ENCODE measurements at regions of chr2 and their contacts with region 1.

Region 1: GRCh38 chr2:9630749-9631483 is at the start of gene YWHAQ:
- DNase-seq: peak; percentile 94
- ATAC-seq: peak; percentile 94
- H3K4me3 ChIP-seq: peak within 1 kb of the TSS; percentile 80
- H3K27ac ChIP-seq: peak within 1 kb of the TSS; percentile 83
- H3K4me1 ChIP-seq: peaks cover 3% of the 10 kb centered on the region; the same call in 1 of the 2 replicates
- H3K27me3 ChIP-seq: no peaks in the 10 kb centered on the region
- CTCF ChIP-seq: no peak
- EP300 ChIP-seq: peak; percentile 4 to 78; a peak in 1 of 4 replicates
- POLR2A ChIP-seq: peak; percentile 97
- RAD21 ChIP-seq: no peak; the same call in 1 of the 2 replicates
- polyA plus RNA-seq, gene YWHAQ: 63.0 to 136 TPM

Region 2: DNA sequence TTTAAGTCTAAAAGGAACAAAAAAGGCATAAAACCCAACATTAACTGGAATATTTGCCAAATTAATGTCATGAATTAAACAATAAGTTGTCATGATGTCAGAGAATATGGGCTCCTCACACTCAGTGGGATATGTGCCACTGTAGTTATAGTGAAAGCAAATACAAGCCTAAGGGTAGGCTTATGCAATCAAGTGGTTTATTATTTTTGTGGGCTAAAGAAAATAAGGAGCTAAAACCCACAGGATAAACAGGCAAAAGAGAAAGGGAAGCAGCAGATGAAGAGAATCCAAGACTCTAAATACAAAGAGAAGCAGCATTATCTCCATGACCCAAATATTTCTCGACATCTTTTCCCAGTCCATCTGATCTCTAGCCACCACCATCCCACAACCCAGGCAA is 17.6 kb before region 1 on chr2:
- CTCF ChIA-PET with region 1: interaction called, 4 read pairs
- POLR2A ChIA-PET with region 1: interaction called, 16 read pairs
- RAD21 ChIA-PET with region 1: interaction called, 19 read pairs
- SMC1A ChIA-PET with region 1: interaction called, 43 read pairs
- in situ Hi-C with region 1: no loop called
- intact Hi-C with region 1: no loop called
- DNase-seq: no peak
- ATAC-seq: no peak
- H3K4me3 ChIP-seq: no peak overlapping the region
- H3K27ac ChIP-seq: no peak overlapping the region
- H3K4me1 ChIP-seq: peaks cover 6% of the 10 kb centered on the region; the same call in 1 of the 2 replicates
- H3K27me3 ChIP-seq: no peaks in the 10 kb centered on the region
- CTCF ChIP-seq: no peak
- EP300 ChIP-seq: no peak
- POLR2A ChIP-seq: no peak
- RAD21 ChIP-seq: no peak

Region 3: DNA sequence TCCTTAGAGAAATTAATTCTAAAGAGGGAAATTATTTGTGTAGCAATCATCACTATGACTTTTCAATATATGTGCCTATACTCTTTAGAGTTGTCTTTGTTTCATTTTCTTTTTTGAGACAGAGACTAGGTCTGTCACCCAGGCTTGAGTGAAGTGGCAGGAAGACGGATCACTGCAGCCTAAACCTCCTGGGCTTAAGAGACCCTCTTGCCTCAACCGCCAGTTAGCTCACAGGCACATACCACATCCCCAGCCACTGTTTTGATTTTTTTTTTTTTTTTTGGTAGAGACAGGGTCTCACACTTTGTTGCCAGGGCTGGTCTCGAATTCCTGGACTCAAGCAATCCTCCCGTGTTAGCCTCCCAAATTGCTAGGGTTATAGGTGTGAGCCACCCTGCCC is 12.5 kb before region 1 on chr2:
- CTCF ChIA-PET with region 1: interaction called, 10 read pairs
- POLR2A ChIA-PET with region 1: interaction called, 26 read pairs
- RAD21 ChIA-PET with region 1: interaction called, 18 read pairs
- SMC1A ChIA-PET with region 1: interaction called, 43 read pairs
- in situ Hi-C with region 1: no loop called
- intact Hi-C with region 1: no loop called
- DNase-seq: no peak
- ATAC-seq: peak; percentile 91
- H3K4me3 ChIP-seq: no peak overlapping the region
- H3K27ac ChIP-seq: no peak overlapping the region
- H3K4me1 ChIP-seq: no peaks in the 10 kb centered on the region
- H3K27me3 ChIP-seq: no peaks in the 10 kb centered on the region
- CTCF ChIP-seq: no peak
- EP300 ChIP-seq: no peak
- POLR2A ChIP-seq: no peak
- RAD21 ChIP-seq: no peak

Region 4: GRCh38 chr2:9656270-9656766 is 25.4 kb after region 1 on chr2:
- CTCF ChIA-PET with region 1: no interaction called
- POLR2A ChIA-PET with region 1: no interaction called
- RAD21 ChIA-PET with region 1: interaction called, 4 read pairs
- SMC1A ChIA-PET with region 1: interaction called, 10 read pairs
- in situ Hi-C with region 1: no loop called
- intact Hi-C with region 1: loop called (anchors 2 kb)
- DNase-seq: peak; percentile 95
- ATAC-seq: peak; percentile 94
- H3K4me3 ChIP-seq: peak overlapping the region; percentile 60
- H3K27ac ChIP-seq: peak overlapping the region; percentile 62
- H3K4me1 ChIP-seq: peaks cover 42% of the 10 kb centered on the region
- H3K27me3 ChIP-seq: no peaks in the 10 kb centered on the region
- CTCF ChIP-seq: no peak
- EP300 ChIP-seq: peak; percentile 93 to 97
- POLR2A ChIP-seq: peak; percentile 30; the same call in 1 of the 2 replicates
- RAD21 ChIP-seq: peak; percentile 39